Dorsolateral prefrontal cortex (tissue), 120 donors: ENCODE measurements at regions of chr2 and their contacts with region 1.

Region 1: DNA sequence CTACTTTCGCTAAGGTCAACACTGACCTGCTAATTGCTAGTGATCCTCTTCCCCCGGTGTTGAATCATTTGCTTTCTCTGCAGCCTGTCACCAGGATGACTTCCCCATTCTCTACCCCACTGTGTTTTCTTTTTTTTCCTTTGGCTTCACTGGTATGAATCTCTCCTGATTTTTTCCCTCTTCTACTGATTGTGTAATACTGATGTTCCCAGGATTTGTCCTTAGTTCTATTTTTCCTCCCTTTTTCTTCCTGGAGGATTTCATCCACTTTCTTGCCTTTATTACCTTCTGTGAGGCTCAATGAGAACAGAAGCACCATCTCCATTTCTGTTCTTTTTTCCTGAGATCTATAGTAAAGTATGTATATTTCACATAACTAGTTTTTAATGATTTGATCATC is 14.1 kb upstream of the MSH2 start:
- DNase-seq: no peak
- H3K4me3 ChIP-seq: no peak overlapping the region
- H3K27ac ChIP-seq: no peak overlapping the region
- H3K27me3 ChIP-seq: no peaks in the 10 kb centered on the region
- CTCF ChIP-seq: no peak

Region 2: DNA sequence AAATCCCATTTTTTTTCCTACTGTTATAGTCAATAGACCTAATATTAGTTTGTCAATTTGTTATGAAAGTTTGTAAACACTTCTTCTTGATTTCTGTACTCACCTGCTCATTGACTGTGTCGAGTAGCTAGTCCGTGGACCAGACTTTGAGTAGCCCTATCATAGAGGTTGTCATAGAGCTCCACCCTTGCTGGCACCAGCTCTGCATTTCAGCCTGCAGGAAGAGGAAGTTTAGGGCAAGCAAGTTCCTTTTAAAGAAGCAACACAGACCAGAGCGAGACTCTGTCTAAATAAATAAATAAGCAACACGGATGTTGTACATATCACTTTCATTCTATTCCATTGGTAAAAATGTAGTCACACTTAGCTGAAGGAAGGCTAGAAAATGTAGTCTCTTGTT is 547.3 kb before region 1 on chr2:
- intact Hi-C with region 1: no loop called
- DNase-seq: no peak
- H3K4me3 ChIP-seq: no peak overlapping the region
- H3K27ac ChIP-seq: no peak overlapping the region
- H3K27me3 ChIP-seq: no peaks in the 10 kb centered on the region
- CTCF ChIP-seq: no peak

Region 3: DNA sequence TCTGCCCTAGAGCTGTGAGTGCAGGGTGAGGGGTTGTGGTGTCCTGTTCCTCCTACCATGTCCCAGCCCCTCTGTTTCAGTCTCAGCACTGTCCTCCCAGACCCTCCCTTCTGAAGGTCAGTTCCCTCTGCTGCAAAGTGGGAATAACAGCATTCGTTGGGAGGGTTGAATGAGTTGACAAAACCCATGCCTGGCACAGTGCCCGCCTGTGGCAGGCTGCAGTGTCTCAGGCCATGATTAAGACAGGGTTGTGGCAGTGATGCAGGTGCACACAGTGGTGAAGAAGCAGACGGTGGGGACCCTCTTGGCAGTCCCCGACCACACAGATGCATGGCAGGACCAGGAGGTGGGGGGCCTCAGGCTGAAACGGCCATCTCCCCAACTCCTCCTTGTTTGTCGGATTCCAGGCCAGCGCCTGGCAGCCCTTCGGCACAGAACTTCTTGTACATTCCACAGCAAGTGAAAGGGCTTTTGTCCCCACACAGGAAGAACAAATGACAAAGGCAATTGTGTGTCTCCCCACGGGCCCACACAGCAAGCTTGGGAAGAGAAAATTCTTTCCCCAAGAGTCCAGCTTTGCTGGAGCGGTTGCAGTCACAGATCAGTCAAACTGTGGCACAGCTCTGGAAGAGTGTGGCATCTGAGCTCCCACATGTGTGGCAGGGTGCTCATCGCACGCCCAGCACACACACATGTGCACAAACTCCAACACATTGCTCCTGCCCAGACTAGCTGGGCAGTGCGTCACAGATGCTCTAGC is 77.9 kb before region 1 on chr2:
- intact Hi-C with region 1: no loop called
- DNase-seq: peak; percentile 21 to 95 (median 86)
- H3K4me3 ChIP-seq: peak overlapping the region in 33 of 59 donors; percentile 9 to 62 (median 36)
- H3K27ac ChIP-seq: peak overlapping the region; percentile 80 to 100 (median 99)
- H3K27me3 ChIP-seq: no peaks in the 10 kb centered on the region
- CTCF ChIP-seq: peak in 6 of 56 donors; percentile 1 to 16 (median 11)

Region 4: GRCh38 chr2:47334356-47335136 is 54.3 kb before region 1 on chr2:
- intact Hi-C with region 1: loop called (anchors 1 to 2 kb)
- DNase-seq: no peak
- H3K4me3 ChIP-seq: no peak overlapping the region
- H3K27ac ChIP-seq: peak overlapping the region in 58 of 59 donors; percentile 14 to 89 (median 78)
- H3K27me3 ChIP-seq: no peaks in the 10 kb centered on the region
- CTCF ChIP-seq: peak in 1 of 56 donors; percentile 6

Region 5: GRCh38 chr2:47339745-47340541 is 48.9 kb before region 1 on chr2:
- intact Hi-C with region 1: loop called (anchors 1 to 2 kb)
- DNase-seq: no peak
- H3K4me3 ChIP-seq: no peak overlapping the region
- H3K27ac ChIP-seq: no peak overlapping the region
- H3K27me3 ChIP-seq: no peaks in the 10 kb centered on the region
- CTCF ChIP-seq: no peak

Region 6: GRCh38 chr2:47344890-47345589 is 43.8 kb before region 1 on chr2:
- intact Hi-C with region 1: loop called in 1 of 2 experiments (anchors 2 kb)
- DNase-seq: peak; percentile 69 to 93 (median 90)
- H3K4me3 ChIP-seq: peak overlapping the region; percentile 27 to 76 (median 58)
- H3K27ac ChIP-seq: peak overlapping the region; percentile 42 to 97 (median 88)
- H3K27me3 ChIP-seq: no peaks in the 10 kb centered on the region
- CTCF ChIP-seq: peak in 40 of 56 donors; percentile 10 to 60 (median 36)

Region 7: GRCh38 chr2:47471429-47472116 is 82.7 kb after region 1 on chr2:
- intact Hi-C with region 1: no loop called
- DNase-seq: no peak
- H3K4me3 ChIP-seq: no peak overlapping the region
- H3K27ac ChIP-seq: no peak overlapping the region
- H3K27me3 ChIP-seq: no peaks in the 10 kb centered on the region
- CTCF ChIP-seq: no peak

Region 8: GRCh38 chr2:47520825-47521665 is 132.2 kb after region 1 on chr2:
- intact Hi-C with region 1: no loop called
- DNase-seq: peak; percentile 57 to 83 (median 72)
- H3K4me3 ChIP-seq: peak overlapping the region; percentile 45 to 75 (median 59)
- H3K27ac ChIP-seq: peak overlapping the region in 58 of 59 donors; percentile 37 to 95 (median 83)
- H3K27me3 ChIP-seq: peaks cover 0 to 2% (median 0%) of the 10 kb centered on the region in 45 donors
- CTCF ChIP-seq: peak in 47 of 56 donors; percentile 14 to 74 (median 44)